ENCODE measurements at regions of chr5 and their contacts with region 1.

Region 1: DNA sequence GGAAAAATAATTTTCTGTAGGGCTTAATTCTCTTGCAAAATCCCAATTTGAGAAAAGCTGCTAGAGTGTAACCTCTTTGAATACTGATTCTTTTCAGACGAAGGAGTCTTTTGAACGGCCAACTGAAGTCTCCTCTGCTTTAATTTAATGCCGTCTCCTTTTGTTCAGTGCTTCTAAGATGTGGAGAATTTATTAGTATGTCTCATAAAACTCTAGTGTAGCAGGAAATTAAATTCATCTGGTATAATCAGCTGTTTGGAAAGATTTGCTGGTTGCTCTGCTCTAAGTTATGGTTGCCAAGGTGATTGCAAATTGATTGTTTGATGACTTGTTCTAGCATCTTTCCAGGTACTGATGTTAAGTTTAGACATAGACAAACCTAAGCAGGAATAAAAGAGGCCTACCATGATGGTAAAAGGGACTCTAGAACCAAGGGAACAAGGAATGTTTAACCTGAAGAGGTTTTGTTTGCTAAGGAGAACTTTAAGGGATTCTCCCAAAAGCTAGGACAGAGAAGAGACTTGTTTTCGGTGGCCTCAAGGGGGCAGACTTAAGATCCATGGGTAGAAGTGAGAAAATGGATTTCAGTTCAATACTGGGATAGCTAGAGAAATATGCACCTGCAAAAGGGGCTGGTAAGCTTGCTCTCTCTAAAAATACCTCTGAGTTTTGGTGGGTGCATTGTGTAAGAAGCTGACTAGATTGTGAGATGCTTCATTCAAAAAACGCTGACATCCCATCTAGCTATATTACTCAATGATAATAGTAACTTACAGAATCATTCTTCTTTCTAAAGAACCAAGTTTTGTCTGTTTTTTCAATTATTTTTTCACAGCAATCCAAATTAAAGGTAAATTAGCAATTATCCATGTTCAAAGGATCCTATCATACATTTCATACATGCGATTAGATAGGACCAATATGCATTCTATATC is 5.7 kb upstream of the ADRB2 start:
- DNase-seq: peak in 4 of 9 donors; percentile 9 to 38 (median 20)
- ATAC-seq: peak; percentile 57
- H3K4me3 ChIP-seq: no peak overlapping the region
- H3K4me3 Mint-ChIP-seq: no peak overlapping the region
- H3K27ac ChIP-seq: no peak overlapping the region
- H3K27ac Mint-ChIP-seq: no peak overlapping the region
- H3K4me1 ChIP-seq: peaks cover 0 to 8% of the 10 kb centered on the region in 2 donors
- H3K4me1 Mint-ChIP-seq: peaks cover 3 to 15% (median 8%) of the 10 kb centered on the region in 7 donors
- H3K27me3 ChIP-seq: no peaks in the 10 kb centered on the region
- H3K27me3 Mint-ChIP-seq: peaks cover 0 to 51% (median 0%) of the 10 kb centered on the region in 5 donors

Region 2: GRCh38 chr5:148805326-148806290 is 15.1 kb before region 1 on chr5:
- CTCF ChIA-PET with region 1: interaction called, 3 read pairs
- POLR2A ChIA-PET with region 1: no interaction called
- intact Hi-C with region 1: loop called in 1 of 2 experiments (anchors 1 kb)
- DNase-seq: peak in 1 of 9 donors; percentile 39
- ATAC-seq: peak; percentile 4
- H3K4me3 ChIP-seq: no peak overlapping the region
- H3K4me3 Mint-ChIP-seq: no peak overlapping the region
- H3K27ac ChIP-seq: no peak overlapping the region
- H3K27ac Mint-ChIP-seq: peak overlapping the region in 4 of 9 donors; percentile 13 to 65 (median 28)
- H3K4me1 ChIP-seq: peaks cover 10 to 12% of the 10 kb centered on the region in 2 donors
- H3K4me1 Mint-ChIP-seq: peaks cover 20 to 35% (median 26%) of the 10 kb centered on the region in 7 donors
- H3K27me3 ChIP-seq: no peaks in the 10 kb centered on the region
- H3K27me3 Mint-ChIP-seq: peaks cover 0 to 5% (median 0%) of the 10 kb centered on the region in 5 donors

Region 3: GRCh38 chr5:148957591-148958202 is 137.0 kb after region 1 on chr5:
- CTCF ChIA-PET with region 1: interaction called, 4 read pairs
- POLR2A ChIA-PET with region 1: no interaction called
- intact Hi-C with region 1: loop called (anchors 1 kb)
- DNase-seq: peak in 6 of 9 donors; percentile 12 to 31 (median 20)
- ATAC-seq: peak; percentile 57
- H3K4me3 ChIP-seq: no peak overlapping the region
- H3K4me3 Mint-ChIP-seq: no peak overlapping the region
- H3K27ac ChIP-seq: no peak overlapping the region
- H3K27ac Mint-ChIP-seq: no peak overlapping the region
- H3K4me1 ChIP-seq: no peaks in the 10 kb centered on the region
- H3K4me1 Mint-ChIP-seq: no peaks in the 10 kb centered on the region
- H3K27me3 ChIP-seq: no peaks in the 10 kb centered on the region
- H3K27me3 Mint-ChIP-seq: peaks cover 0 to 17% (median 5%) of the 10 kb centered on the region in 5 donors

Region 4: DNA sequence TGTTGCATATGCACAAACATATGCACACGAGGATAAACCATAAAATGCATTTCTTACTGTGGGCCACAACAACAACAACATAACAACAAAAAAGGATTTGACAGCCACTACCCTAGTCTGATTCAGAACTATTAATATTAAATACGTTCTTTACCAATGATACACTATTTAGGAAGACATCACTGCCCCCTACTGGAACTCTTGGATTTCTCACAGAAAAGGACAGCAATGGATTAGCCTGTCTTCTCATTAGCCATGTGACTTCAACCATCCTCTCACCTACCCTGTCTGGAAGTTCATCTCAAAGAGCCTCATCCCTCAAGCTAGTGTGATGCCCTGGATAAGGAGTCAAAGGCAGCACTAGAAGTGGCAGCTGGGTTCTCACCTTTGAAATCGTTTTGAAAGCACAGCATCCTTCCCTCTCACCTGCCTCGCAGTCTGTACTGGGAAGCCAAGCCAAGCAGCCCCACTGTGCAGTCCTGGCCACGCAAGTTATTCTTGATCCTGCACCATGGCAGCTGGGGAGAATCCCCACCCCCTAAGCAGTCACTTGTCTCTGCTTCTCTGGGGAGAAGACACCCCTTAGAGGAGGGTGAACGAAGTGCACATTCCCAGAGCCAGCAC is 177.6 kb after region 1 on chr5:
- CTCF ChIA-PET with region 1: interaction called, 4 read pairs
- POLR2A ChIA-PET with region 1: no interaction called
- intact Hi-C with region 1: loop called (anchors 1 to 2 kb)
- DNase-seq: peak in 5 of 9 donors; percentile 5 to 25 (median 17)
- ATAC-seq: peak; percentile 67
- H3K4me3 ChIP-seq: no peak overlapping the region
- H3K4me3 Mint-ChIP-seq: no peak overlapping the region
- H3K27ac ChIP-seq: no peak overlapping the region
- H3K27ac Mint-ChIP-seq: no peak overlapping the region
- H3K4me1 ChIP-seq: no peaks in the 10 kb centered on the region
- H3K4me1 Mint-ChIP-seq: no peaks in the 10 kb centered on the region
- H3K27me3 ChIP-seq: no peaks in the 10 kb centered on the region
- H3K27me3 Mint-ChIP-seq: peaks cover 19 to 61% (median 28%) of the 10 kb centered on the region in 5 donors

Region 5: GRCh38 chr5:149114403-149115312 is 293.9 kb after region 1 on chr5:
- CTCF ChIA-PET with region 1: no interaction called
- POLR2A ChIA-PET with region 1: no interaction called
- intact Hi-C with region 1: loop called in 1 of 2 experiments (anchors 1 kb)
- DNase-seq: peak in 5 of 9 donors; percentile 27 to 45 (median 32)
- ATAC-seq: peak; percentile 76
- H3K4me3 ChIP-seq: no peak overlapping the region
- H3K4me3 Mint-ChIP-seq: no peak overlapping the region
- H3K27ac ChIP-seq: no peak overlapping the region
- H3K27ac Mint-ChIP-seq: no peak overlapping the region
- H3K4me1 ChIP-seq: no peaks in the 10 kb centered on the region
- H3K4me1 Mint-ChIP-seq: peaks cover 0 to 1% (median 0%) of the 10 kb centered on the region in 7 donors
- H3K27me3 ChIP-seq: no peaks in the 10 kb centered on the region
- H3K27me3 Mint-ChIP-seq: peaks cover 19 to 31% (median 27%) of the 10 kb centered on the region in 5 donors